Posterior vena cava (tissue), 2 donors: ENCODE measurements at regions of chr12 and their contacts with region 1.

Region 1: GRCh38 chr12:104790296-104791125 is 167.6 kb downstream of the SLC41A2 start:
- DNase-seq: peak; percentile 85

Region 2: GRCh38 chr12:104494137-104494792 is 296.2 kb before region 1 on chr12:
- intact Hi-C with region 1: no loop called
- DNase-seq: no peak

Region 3: GRCh38 chr12:104805186-104805585 is 14.7 kb after region 1 on chr12:
- intact Hi-C with region 1: loop called in 1 of 2 experiments (anchors 1 kb)
- DNase-seq: no peak

Region 4: GRCh38 chr12:104886418-104887401 is 96.2 kb after region 1 on chr12:
- intact Hi-C with region 1: no loop called
- DNase-seq: no peak